ENCODE measurements at regions of chr2 and their contacts with region 1.

Region 1: DNA sequence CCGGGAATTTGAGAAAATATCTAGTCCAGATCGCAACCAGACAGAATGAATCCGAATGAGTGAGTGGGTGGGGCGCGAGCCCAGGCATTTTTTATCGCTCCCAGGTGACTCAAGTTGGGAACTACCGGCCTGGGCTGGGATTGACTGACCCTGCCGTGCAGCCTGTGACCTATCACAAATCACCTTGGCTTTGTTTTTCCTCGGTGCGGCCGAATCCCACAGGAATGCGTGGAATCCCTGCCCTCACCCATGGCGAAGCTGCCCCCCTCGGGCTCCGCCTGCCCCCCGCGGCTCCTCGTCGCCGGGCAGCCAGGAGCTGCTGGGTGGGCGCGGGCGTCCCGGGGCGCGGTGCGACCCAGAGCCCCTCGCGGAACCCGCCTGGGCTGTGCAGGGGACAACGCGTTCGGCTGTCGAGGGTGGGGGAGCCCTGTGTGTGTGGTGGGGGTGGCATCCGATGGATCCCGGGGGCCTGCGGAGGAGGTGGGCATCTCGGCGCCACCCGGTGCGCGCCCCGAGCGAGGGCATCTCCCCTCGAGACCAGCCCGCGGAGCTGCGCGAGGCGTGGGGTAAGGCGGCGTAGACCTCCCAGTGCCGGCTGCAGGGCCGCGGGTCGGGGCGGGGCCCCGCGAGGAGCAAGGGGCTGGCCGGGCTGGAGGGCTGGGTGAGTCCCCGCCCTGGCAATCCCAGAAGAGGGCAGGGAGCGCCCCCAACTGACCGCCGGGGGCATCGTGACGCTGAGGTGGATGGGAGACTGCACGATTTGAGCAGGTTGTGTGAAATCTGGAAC is 16.5 kb downstream of the B3GNT7 start:
- DNase-seq: peak; percentile 91
- ATAC-seq: peak; percentile 97
- H3K4me3 ChIP-seq: peak overlapping the region; percentile 85
- H3K27ac ChIP-seq: peak overlapping the region; percentile 77
- H3K4me1 ChIP-seq: peaks cover 14% of the 10 kb centered on the region
- H3K27me3 ChIP-seq: no peaks in the 10 kb centered on the region
- CTCF ChIP-seq: peak; percentile 93

Region 2: DNA sequence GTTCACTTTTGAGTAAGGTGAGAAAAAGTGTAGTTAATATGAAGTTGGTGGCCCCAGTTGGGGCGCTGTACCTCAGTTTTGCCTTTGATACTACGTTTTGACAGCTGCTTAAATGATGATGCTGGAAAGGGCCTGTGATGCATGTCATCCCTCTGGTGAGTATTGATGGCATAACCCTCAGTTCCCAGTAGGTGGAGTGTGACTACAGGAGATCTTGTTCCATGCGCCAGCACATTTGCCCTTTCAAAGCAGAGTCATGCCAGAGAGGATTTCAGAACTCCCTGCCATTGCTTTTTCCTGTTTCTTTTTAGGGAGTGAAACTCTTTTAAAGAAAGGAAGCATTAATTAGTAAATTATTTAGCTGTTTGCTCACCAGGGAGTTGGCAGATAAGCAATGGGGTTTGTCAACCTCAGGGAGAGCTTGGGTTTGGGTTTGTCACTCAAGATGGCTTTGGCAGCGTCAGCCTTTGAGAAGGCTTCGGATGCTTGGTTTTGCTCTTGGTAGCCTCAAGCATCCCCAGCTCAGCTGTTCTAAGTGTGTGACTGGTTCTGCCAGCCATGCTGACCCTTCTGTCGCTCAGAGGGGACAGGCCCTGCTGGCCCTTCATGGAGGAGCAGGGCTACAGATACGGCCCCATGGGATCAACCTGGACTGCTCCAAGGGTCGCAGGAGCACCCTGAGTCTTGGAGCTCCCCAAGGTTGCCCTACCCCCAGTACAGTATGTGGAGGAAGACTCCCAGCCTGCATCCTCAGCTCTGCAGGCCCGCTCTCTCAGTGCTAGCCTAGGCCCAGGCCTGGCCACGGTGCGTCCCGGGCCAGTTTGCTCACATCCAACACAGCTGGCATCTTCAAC is 184.5 kb before region 1 on chr2:
- CTCF ChIA-PET with region 1: no interaction called
- POLR2A ChIA-PET with region 1: no interaction called
- intact Hi-C with region 1: loop called (anchors 1 kb)
- DNase-seq: peak; percentile 84
- ATAC-seq: peak; percentile 97
- H3K4me3 ChIP-seq: no peak overlapping the region
- H3K27ac ChIP-seq: no peak overlapping the region
- H3K4me1 ChIP-seq: no peaks in the 10 kb centered on the region
- H3K27me3 ChIP-seq: no peaks in the 10 kb centered on the region
- CTCF ChIP-seq: peak; percentile 89